Activated CD8-positive, alpha-beta T cell treated with anti-CD3 and anti-CD28 coated beads for 36 hours (primary cell): ENCODE measurements at regions of chr3 and their contacts with region 1.

Region 1: GRCh38 chr3:113019182-113020137 is 28.7 kb downstream of the GTPBP8 start:
- DNase-seq: peak; percentile 94
- ATAC-seq: peak; percentile 95
- H3K4me3 Mint-ChIP-seq: peak overlapping the region; percentile 83
- H3K27ac Mint-ChIP-seq: peak overlapping the region; percentile 92
- H3K4me1 Mint-ChIP-seq: peaks cover 56% of the 10 kb centered on the region
- H3K27me3 Mint-ChIP-seq: no peaks in the 10 kb centered on the region
- CTCF ChIP-seq: no peak

Region 2: GRCh38 chr3:113002679-113003078 is 16.8 kb before region 1 on chr3:
- CTCF ChIA-PET with region 1: interaction called, 6 read pairs
- POLR2A ChIA-PET with region 1: interaction called, 30 read pairs
- intact Hi-C with region 1: loop called (anchors 1 kb)
- DNase-seq: peak; percentile 73
- ATAC-seq: peak; percentile 73
- H3K4me3 Mint-ChIP-seq: no peak overlapping the region
- H3K27ac Mint-ChIP-seq: peak overlapping the region; percentile 79
- H3K4me1 Mint-ChIP-seq: peaks cover 65% of the 10 kb centered on the region
- H3K27me3 Mint-ChIP-seq: no peaks in the 10 kb centered on the region
- CTCF ChIP-seq: no peak

Region 3: GRCh38 chr3:113008117-113008516 is 11.3 kb before region 1 on chr3:
- CTCF ChIA-PET with region 1: interaction called, 6 read pairs
- POLR2A ChIA-PET with region 1: interaction called, 30 read pairs
- intact Hi-C with region 1: loop called (anchors 1 kb)
- DNase-seq: no peak
- ATAC-seq: no peak
- H3K4me3 Mint-ChIP-seq: no peak overlapping the region
- H3K27ac Mint-ChIP-seq: peak overlapping the region; percentile 93
- H3K4me1 Mint-ChIP-seq: peaks cover 77% of the 10 kb centered on the region
- H3K27me3 Mint-ChIP-seq: no peaks in the 10 kb centered on the region
- CTCF ChIP-seq: no peak

Region 4: DNA sequence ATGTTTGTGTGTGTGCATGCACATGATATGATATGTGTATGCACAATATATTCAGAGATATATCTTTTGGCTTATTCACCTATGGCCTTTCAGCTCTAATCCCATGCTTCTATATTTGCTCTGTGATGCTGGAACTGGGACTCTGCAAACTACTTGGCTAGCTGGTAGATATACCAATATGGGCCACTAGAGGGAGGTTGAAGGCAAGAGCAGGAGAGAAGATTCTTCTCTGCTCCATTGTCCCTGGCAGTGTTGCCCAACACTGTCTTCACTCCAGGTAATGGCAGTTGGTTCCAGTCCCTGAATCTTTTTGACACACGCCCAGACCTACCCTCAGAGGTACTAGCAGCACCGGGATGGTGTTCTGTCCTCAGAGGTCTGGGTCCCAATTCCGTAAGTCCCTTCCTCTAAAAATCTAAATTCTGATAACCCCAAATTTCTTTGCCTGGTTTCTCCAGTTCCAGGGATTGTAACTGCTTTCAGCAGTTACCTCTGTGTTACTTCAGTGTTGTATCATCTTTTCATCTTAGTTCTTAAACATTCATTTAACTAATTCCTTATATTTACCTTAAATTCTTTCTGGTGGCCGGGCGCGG is 16.0 kb after region 1 on chr3:
- CTCF ChIA-PET with region 1: interaction called, 26 read pairs
- POLR2A ChIA-PET with region 1: interaction called, 4 read pairs
- intact Hi-C with region 1: no loop called
- DNase-seq: peak; percentile 41
- ATAC-seq: peak; percentile 81
- H3K4me3 Mint-ChIP-seq: no peak overlapping the region
- H3K27ac Mint-ChIP-seq: no peak overlapping the region
- H3K4me1 Mint-ChIP-seq: no peaks in the 10 kb centered on the region
- H3K27me3 Mint-ChIP-seq: no peaks in the 10 kb centered on the region
- CTCF ChIP-seq: peak; percentile 84